B cell (primary cell): ENCODE measurements at regions of chr12 and their contacts with region 1.

Region 1: DNA sequence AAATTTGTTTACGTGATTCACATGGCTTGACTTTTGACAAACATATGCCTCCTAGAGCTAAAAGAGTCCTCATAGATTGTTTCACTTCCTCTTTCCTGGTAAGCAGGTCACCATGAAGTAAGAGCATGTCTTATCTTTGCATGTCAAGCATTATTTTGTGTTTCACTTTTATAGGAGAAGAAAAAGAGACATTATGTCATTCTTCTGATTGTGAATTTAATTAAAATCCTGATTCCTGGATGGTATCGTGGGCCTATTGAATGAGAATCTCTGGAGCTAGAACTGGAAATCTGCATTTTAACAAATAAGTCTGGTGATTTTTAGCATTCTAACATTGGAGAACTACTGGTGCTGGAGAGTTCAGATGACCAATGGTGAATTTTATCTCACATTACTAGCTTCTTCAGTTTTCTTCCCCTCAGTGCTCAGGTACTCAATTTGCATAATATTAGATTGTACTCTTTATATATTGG is 218.6 kb upstream of the ATP2B1 start:
- DNase-seq: peak; percentile 89
- ATAC-seq: peak; percentile 88
- H3K4me3 ChIP-seq: peak overlapping the region; percentile 46 to 83 (median 60)
- H3K4me3 Mint-ChIP-seq: peak overlapping the region; percentile 95
- H3K27ac ChIP-seq: peak overlapping the region; percentile 96 to 97
- H3K27ac Mint-ChIP-seq: peak overlapping the region; percentile 99
- H3K4me1 ChIP-seq: peaks cover 24 to 32% of the 10 kb centered on the region in 2 donors
- H3K4me1 Mint-ChIP-seq: peaks cover 52% of the 10 kb centered on the region
- H3K27me3 ChIP-seq: no peaks in the 10 kb centered on the region
- H3K27me3 Mint-ChIP-seq: no peaks in the 10 kb centered on the region
- CTCF ChIP-seq: no peak

Region 2: GRCh38 chr12:89252284-89252683 is 675.0 kb before region 1 on chr12:
- CTCF ChIA-PET with region 1: no interaction called
- POLR2A ChIA-PET with region 1: no interaction called
- intact Hi-C with region 1: no loop called
- DNase-seq: no peak
- ATAC-seq: no peak
- H3K4me3 ChIP-seq: no peak overlapping the region
- H3K4me3 Mint-ChIP-seq: no peak overlapping the region
- H3K27ac ChIP-seq: no peak overlapping the region
- H3K27ac Mint-ChIP-seq: no peak overlapping the region
- H3K4me1 ChIP-seq: no peaks in the 10 kb centered on the region
- H3K4me1 Mint-ChIP-seq: no peaks in the 10 kb centered on the region
- H3K27me3 ChIP-seq: no peaks in the 10 kb centered on the region
- H3K27me3 Mint-ChIP-seq: peaks cover 17% of the 10 kb centered on the region
- CTCF ChIP-seq: no peak

Region 3: DNA sequence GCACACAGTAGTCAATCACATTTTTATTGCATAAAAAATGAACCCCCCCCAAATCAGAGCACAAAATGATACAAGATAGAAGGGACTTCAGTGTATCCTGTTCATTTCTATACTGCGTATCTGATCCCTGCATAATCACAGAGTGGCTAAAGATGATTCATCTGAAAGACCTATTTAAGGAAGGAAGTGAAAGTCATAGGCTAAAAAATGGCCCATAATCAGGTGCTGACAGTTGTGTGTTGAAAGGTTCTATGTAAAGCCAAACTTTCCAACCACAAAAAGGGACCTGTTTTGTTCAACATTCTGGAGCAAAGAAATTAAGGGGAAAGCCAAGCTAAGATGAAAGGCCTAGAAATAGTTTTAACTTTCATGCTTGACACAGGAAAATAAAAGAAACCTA is 70.8 kb before region 1 on chr12:
- CTCF ChIA-PET with region 1: interaction called, 5 read pairs
- POLR2A ChIA-PET with region 1: no interaction called
- intact Hi-C with region 1: loop called (anchors 1 kb)
- DNase-seq: peak; percentile 71
- ATAC-seq: peak; percentile 88
- H3K4me3 ChIP-seq: peak overlapping the region in 1 of 5 experiments; percentile 21
- H3K4me3 Mint-ChIP-seq: peak overlapping the region; percentile 64
- H3K27ac ChIP-seq: no peak overlapping the region
- H3K27ac Mint-ChIP-seq: peak overlapping the region; percentile 76
- H3K4me1 ChIP-seq: peaks cover 45 to 46% of the 10 kb centered on the region in 2 donors
- H3K4me1 Mint-ChIP-seq: peaks cover 50% of the 10 kb centered on the region
- H3K27me3 ChIP-seq: no peaks in the 10 kb centered on the region
- H3K27me3 Mint-ChIP-seq: no peaks in the 10 kb centered on the region
- CTCF ChIP-seq: no peak

Region 4: DNA sequence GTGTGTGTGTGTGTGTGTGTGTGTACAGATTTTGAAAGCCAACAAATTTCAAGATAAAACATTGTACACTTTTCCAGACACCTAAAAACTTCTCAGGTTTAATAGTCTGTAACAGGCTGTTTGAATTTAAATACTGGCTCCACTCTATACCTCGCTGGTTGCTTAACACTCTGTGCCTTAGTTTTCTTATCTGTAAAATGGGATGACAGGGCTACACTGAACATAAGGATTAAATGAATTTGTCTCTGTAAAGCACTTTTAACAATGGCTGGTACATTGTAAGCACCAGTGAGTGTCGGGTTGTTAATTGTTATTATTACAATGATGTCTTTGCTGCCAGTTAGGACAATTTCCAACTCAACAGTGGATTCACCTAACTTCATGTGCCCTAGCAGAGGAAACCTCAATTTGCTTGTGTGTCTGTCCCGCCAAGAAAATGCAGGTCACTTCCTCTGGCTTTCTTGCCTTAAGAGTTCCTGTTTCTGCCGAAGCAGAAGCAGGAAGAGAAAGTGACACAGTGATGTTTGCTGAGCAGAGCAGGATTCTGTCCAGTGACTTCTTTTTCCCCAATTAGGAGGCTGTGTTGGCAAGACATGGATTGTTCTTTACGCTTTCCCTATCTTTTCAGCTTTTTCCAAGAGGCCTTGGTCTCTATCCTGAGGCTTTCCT is 64.6 kb before region 1 on chr12:
- CTCF ChIA-PET with region 1: interaction called, 12 read pairs
- POLR2A ChIA-PET with region 1: interaction called, 7 read pairs
- intact Hi-C with region 1: loop called (anchors 1 kb)
- DNase-seq: peak; percentile 88
- ATAC-seq: peak; percentile 68
- H3K4me3 ChIP-seq: peak overlapping the region; percentile 23 to 65 (median 44)
- H3K4me3 Mint-ChIP-seq: peak overlapping the region; percentile 86
- H3K27ac ChIP-seq: peak overlapping the region; percentile 92 to 96
- H3K27ac Mint-ChIP-seq: peak overlapping the region; percentile 98
- H3K4me1 ChIP-seq: peaks cover 58 to 65% of the 10 kb centered on the region in 2 donors
- H3K4me1 Mint-ChIP-seq: peaks cover 68% of the 10 kb centered on the region
- H3K27me3 ChIP-seq: no peaks in the 10 kb centered on the region
- H3K27me3 Mint-ChIP-seq: no peaks in the 10 kb centered on the region
- CTCF ChIP-seq: no peak

Region 5: DNA sequence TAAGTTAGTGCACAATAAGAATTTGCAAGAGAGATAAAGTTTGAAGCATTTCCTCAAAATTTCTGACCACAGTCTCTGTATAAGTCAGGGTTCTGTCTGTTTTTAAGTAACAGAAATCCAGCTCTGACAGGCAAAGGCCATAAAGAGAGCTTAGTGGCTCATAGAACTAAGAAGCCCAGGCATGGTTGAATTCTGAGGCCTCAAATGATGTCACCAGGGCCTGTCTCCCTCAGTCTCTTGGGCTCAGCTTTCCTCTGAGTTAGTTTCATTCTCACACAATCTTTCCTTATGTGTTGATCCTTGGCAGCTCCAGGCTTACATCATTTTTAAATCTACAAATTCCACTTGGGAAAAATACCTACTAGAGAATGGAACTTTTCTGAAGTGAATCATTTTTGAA is 45.2 kb before region 1 on chr12:
- CTCF ChIA-PET with region 1: interaction called, 8 read pairs
- POLR2A ChIA-PET with region 1: interaction called, 16 read pairs
- intact Hi-C with region 1: loop called (anchors 1 kb)
- DNase-seq: peak; percentile 58
- ATAC-seq: peak; percentile 22
- H3K4me3 ChIP-seq: peak overlapping the region in 1 of 5 experiments; percentile 3
- H3K4me3 Mint-ChIP-seq: peak overlapping the region; percentile 89
- H3K27ac ChIP-seq: peak overlapping the region; percentile 94 to 95
- H3K27ac Mint-ChIP-seq: peak overlapping the region; percentile 99
- H3K4me1 ChIP-seq: peaks cover 45 to 52% of the 10 kb centered on the region in 2 donors
- H3K4me1 Mint-ChIP-seq: peaks cover 52% of the 10 kb centered on the region
- H3K27me3 ChIP-seq: no peaks in the 10 kb centered on the region
- H3K27me3 Mint-ChIP-seq: no peaks in the 10 kb centered on the region
- CTCF ChIP-seq: no peak

Region 6: GRCh38 chr12:89960011-89960507 is 32.8 kb after region 1 on chr12:
- CTCF ChIA-PET with region 1: interaction called, 10 read pairs
- POLR2A ChIA-PET with region 1: interaction called, 7 read pairs
- intact Hi-C with region 1: loop called (anchors 5 kb)
- DNase-seq: peak; percentile 66
- ATAC-seq: peak; percentile 86
- H3K4me3 ChIP-seq: no peak overlapping the region
- H3K4me3 Mint-ChIP-seq: peak overlapping the region; percentile 69
- H3K27ac ChIP-seq: no peak overlapping the region
- H3K27ac Mint-ChIP-seq: peak overlapping the region; percentile 77
- H3K4me1 ChIP-seq: peaks cover 16 to 18% of the 10 kb centered on the region in 2 donors
- H3K4me1 Mint-ChIP-seq: peaks cover 34% of the 10 kb centered on the region
- H3K27me3 ChIP-seq: no peaks in the 10 kb centered on the region
- H3K27me3 Mint-ChIP-seq: no peaks in the 10 kb centered on the region
- CTCF ChIP-seq: no peak

Region 7: GRCh38 chr12:90211017-90211416 is 283.8 kb after region 1 on chr12:
- CTCF ChIA-PET with region 1: no interaction called
- POLR2A ChIA-PET with region 1: no interaction called
- intact Hi-C with region 1: no loop called
- DNase-seq: no peak
- ATAC-seq: no peak
- H3K4me3 ChIP-seq: no peak overlapping the region
- H3K4me3 Mint-ChIP-seq: no peak overlapping the region
- H3K27ac ChIP-seq: no peak overlapping the region
- H3K27ac Mint-ChIP-seq: no peak overlapping the region
- H3K4me1 ChIP-seq: no peaks in the 10 kb centered on the region
- H3K4me1 Mint-ChIP-seq: peaks cover 7% of the 10 kb centered on the region
- H3K27me3 ChIP-seq: no peaks in the 10 kb centered on the region
- H3K27me3 Mint-ChIP-seq: peaks cover 6% of the 10 kb centered on the region
- CTCF ChIP-seq: no peak